Heart left ventricle (tissue), 16 donors: ENCODE measurements at regions of chr15 and their contacts with region 1.

Region 1: DNA sequence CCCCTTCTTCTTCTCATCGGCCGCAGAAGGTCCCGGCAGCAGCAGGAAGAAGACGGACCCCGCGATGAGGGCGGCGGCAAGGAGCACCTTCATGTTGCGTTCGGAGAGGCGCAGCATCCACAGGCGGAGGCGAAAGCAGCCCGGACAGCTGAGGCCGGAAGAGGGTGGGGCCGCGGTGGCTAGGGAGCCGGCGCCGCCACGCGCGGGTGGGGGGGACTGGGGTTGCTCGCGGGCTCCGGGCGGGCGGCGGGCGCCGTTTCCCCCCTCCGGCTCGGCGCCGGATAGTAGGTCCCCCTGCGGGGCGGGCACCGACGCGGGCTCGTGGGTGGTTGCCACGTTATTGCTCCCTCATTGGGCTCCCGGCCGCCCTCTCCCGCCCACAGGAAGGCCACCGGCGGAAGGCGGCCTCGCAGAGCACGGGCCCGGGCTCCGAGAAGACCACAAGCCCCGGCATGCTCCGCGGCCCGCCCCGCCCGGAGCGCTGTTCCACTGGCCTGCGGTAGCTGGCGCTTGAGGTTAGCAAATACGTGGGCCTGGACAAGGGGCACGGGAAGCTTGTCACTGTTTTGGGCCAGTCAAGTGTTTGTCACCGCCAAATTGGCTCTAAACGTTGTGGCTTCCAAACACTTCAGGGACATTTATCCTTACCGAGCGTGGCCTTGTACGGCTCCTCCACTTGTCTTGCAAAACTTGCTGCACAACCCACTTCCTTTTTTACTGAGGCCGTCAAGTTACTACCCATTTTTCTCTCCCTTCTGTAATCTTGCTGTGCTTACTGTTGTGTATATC is at the start of gene PPIB:
- DNase-seq: peak; percentile 97 to 100 (median 99)
- ATAC-seq: peak; percentile 94 to 97 (median 96)
- H3K4me3 ChIP-seq: peak within 1 kb of the TSS; percentile 67 to 95 (median 84)
- H3K27ac ChIP-seq: peak within 1 kb of the TSS; percentile 72 to 95 (median 90)
- H3K4me1 ChIP-seq: peaks cover 11 to 58% (median 44%) of the 10 kb centered on the region in 12 donors
- H3K27me3 ChIP-seq: no peaks in the 10 kb centered on the region
- CTCF ChIP-seq: peak in 11 of 12 donors; percentile 20 to 76 (median 43)
- POLR2A ChIP-seq: peak; percentile 41 to 72
- total RNA-seq, gene PPIB: 73.7 to 239 (median 113) TPM

Region 2: DNA sequence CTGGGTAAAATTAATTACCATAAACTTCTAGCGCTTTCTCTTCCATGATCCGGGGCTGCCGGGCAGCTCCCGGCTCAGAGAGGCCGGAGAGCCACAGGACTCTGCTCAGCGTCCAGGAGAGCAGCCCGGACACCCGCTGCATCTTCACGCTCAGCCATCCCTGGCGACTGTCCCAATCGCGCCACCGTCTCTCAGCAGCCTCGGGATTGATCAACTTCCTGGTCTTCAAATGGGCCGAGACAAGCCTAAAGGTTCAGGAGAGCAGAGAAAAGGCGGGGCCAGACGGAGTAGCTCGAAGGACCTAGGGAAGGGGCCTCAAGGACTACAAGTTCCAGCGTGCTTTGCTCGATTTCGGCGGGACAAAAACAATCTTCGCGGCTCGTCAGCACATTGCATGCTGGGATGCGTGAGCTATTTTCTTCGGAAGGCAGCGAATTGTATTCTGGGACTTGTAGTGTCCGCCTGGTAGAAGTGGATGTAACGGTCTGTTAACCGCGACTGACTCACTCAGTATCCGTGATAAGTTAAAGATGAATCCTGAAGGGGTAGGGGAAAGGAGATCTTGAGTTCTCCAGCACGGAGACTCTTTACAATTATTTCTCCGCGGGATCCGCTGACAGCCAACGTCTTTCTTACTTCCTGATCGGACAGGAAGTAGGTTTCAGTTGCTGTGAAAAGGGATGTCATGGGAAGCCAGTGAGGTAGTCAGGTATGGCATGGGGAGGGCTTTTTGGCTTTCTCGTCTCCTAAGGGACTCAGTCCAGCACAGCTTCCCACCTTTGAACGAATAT is 69.2 kb before region 1 on chr15 and contains the start of gene CIAO2A:
- intact Hi-C with region 1: loop called in 1 of 10 experiments (anchors 2 kb)
- DNase-seq: peak; percentile 93 to 97 (median 96)
- ATAC-seq: peak; percentile 79 to 89 (median 88)
- H3K4me3 ChIP-seq: peak within 1 kb of the TSS; percentile 62 to 88 (median 80)
- H3K27ac ChIP-seq: peak within 1 kb of the TSS; percentile 80 to 97 (median 88)
- H3K4me1 ChIP-seq: peaks cover 5 to 84% (median 58%) of the 10 kb centered on the region in 12 donors
- H3K27me3 ChIP-seq: no peaks in the 10 kb centered on the region
- CTCF ChIP-seq: no peak
- POLR2A ChIP-seq: peak in 1 of 2 donors; percentile 66
- total RNA-seq, gene CIAO2A: 41.6 to 79.5 (median 55.4) TPM